Posterior vena cava (tissue), 2 donors: ENCODE measurements at regions of chr1 and their contacts with region 1.

Region 1: GRCh38 chr1:152349611-152350010 is 10.2 kb downstream of the FLG2 start:
- DNase-seq: no peak

Region 2: DNA sequence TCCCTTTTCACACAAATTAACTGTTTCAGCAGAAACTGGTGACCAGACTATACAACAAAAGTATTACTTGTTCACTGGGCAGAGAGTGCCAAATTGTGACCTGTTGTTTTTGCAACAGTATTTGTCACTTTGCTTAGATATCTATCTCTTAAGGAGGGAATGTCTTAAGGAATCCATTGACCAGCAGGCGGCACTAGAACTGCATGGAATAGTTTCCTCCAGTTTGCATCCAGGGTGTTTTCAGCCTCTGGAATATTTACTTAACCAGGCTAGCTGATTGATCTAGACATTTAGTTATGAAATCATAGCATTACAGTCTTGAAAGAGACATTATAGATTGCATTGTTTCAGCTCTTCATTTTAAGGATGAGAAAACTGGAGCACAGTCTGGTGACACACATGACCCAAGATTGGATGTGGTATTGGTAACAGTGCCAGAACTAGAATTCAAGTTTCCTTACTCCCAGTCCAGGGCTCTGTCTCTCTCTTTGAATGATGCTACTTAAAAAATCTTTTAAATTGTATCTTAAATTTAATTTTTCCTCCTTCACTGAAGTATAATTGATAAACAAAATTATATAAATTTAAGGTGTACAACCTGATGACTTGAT is 207.5 kb before region 1 on chr1:
- intact Hi-C with region 1: loop called in 1 of 2 experiments (anchors 5 kb)
- DNase-seq: no peak

Region 3: DNA sequence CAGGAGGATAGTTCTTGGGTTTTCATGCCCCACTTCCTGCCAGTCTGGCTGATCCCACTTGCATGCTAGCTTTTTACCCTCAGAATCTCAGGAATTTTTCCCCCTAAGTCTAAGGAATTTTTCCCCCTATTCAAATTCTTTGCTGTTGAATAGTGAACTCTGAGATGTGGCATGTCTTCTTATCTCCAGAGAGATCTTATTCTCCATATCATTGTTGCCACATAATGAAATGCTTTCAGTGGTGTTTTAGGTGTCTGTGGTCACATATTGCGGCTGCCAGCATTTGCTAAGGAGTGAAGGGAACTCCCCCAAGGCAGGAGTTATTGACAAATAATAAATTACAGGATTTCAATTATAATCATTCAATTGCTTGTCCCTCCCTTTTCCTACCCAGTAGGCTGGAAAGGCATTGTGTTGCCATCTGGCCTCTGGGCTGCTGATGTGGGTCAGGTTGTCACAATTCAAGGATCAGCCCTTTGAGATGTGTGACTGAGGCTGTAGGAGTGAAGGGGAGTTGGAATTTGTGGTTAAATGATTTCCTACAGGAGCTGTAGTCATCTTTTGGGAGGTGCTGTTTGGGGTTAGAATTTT is 20.7 kb before region 1 on chr1:
- intact Hi-C with region 1: no loop called
- DNase-seq: no peak